HEK293 (cell line): ENCODE measurements at regions of chr7 and their contacts with region 1.

Region 1: DNA sequence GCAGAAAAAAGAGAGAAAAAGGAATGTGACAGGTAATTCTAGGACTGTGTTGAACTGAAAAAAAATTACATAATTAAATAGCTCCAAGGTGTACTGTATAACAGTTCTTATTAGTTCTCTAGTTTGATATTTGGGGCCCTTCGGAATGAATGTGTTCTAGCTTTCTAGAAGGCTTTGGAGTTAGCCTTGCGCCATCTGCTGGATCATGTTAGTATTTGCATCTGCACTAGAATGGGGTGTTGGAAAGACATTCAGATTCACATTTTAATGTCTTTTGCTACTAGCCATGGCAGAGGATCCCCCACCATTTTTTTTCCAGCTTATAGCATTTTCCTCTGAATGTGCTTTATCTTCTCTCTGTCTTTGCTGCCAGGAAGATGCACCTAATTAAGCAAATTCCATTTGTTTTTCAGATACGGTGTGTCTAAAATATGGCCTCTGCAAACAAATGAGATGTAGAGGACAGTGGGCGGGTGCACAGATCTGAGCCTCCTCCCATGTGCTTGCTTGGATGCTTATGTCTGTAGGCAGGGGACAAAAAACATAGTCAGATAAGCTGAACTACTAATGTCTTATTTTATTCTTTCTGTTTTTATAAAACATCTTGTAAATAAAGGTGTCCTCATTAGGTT is 238.5 kb downstream of the PHF14 start:
- H3K4me3 ChIP-seq: no peak overlapping the region
- H3K27ac ChIP-seq: no peak overlapping the region
- H3K4me1 ChIP-seq: 0 out of 2 replicates have a peak, but pooled peaks cover 2% of the 10 kb centered on the region
- CTCF ChIP-seq: no peak

Region 2: DNA sequence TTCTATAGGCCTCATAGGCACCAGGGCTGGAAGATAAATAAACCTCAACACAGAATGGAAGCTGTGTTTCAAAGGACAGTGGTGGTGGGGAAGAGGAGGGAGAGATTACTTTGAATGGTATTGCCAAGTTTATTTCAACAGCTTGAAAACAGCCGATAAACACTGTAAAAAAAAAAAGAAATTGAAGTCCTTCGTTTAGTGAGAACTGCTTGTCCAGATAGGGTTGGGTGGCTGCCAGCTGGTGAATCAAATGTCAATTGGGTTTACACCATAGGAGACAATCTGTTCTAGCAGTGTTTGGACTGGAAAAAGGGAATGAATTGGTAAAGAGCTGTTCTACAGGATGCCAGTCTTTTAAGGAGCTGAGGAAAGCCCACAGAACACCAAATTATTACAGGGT is 16.3 kb after region 1 on chr7:
- CTCF ChIA-PET with region 1: interaction called, 24 read pairs
- POLR2A ChIA-PET with region 1: no interaction called
- H3K4me3 ChIP-seq: no peak overlapping the region
- H3K27ac ChIP-seq: no peak overlapping the region
- H3K4me1 ChIP-seq: peaks cover 8% of the 10 kb centered on the region
- CTCF ChIP-seq: no peak

Region 3: DNA sequence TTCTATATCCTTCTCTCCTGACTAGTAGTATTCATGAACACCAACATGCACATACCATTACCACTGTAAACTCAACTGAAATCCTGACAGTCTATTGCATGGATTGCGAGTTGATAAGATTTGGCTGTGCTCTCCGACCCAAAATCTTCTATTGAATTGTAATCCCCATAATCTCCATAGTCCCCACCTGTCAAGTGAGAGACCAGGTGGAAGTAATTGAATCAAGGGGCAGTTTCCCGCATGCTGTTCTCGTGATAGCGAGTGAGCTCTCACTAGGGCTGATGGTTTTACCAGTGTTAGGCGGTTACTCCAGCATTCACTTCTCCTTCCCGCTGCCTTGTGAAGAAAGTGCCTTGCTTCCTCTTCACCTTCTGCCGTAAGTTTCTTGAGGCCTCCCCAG is 23.3 kb after region 1 on chr7:
- CTCF ChIA-PET with region 1: interaction called, 11 read pairs
- POLR2A ChIA-PET with region 1: no interaction called
- H3K4me3 ChIP-seq: no peak overlapping the region
- H3K27ac ChIP-seq: no peak overlapping the region
- H3K4me1 ChIP-seq: no peaks in the 10 kb centered on the region
- CTCF ChIP-seq: no peak

Region 4: GRCh38 chr7:11427686-11428273 is 215.6 kb after region 1 on chr7:
- CTCF ChIA-PET with region 1: no interaction called
- POLR2A ChIA-PET with region 1: no interaction called
- H3K4me3 ChIP-seq: no peak overlapping the region
- H3K27ac ChIP-seq: no peak overlapping the region
- H3K4me1 ChIP-seq: no peaks in the 10 kb centered on the region
- CTCF ChIP-seq: no peak